Activated CD4-positive, alpha-beta T cell treated with anti-CD3 and anti-CD28 coated beads for 36 hours (primary cell): ENCODE measurements at regions of chr6 and their contacts with region 1.

Region 1: GRCh38 chr6:6676910-6677441 is 88.5 kb downstream of the LY86 start:
- DNase-seq: peak; percentile 86
- ATAC-seq: peak; percentile 78
- H3K4me3 Mint-ChIP-seq: no peak overlapping the region
- H3K27ac Mint-ChIP-seq: no peak overlapping the region
- H3K4me1 Mint-ChIP-seq: peaks cover 9% of the 10 kb centered on the region
- H3K27me3 Mint-ChIP-seq: no peaks in the 10 kb centered on the region

Region 2: DNA sequence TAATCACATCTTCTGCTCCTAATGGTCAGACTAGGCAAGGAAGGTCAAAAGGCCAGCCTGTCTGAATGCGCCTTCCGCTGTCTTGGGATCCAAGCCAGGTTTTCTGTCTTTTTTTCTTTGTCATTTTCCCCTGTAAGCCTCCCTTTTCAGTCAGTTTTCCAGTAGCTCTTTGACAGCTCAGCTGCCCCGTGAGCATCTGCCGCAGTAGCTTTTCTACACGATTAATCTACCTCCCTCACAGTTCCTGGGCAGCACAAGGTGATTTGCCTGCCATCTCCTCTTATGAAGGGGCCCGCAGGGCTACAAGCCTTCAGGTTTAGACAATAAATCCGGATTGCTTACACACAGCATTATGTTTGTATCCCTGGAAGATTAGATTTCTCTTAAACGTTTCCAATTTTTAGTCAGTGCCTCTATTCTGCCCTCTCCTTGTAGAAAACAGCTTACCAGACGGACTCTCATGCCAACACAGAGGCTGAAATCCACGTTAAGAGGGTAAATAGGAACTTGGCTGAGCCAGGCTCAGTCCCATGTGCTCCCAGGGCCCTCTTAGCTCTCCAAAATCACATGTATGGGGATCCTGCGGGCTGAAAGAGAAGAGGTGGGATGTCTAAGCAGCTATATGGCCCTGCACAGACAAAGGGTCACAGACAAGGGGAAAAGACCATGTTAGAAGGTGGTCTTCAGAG is 11.3 kb before region 1 on chr6:
- CTCF ChIA-PET with region 1: interaction called, 20 read pairs
- POLR2A ChIA-PET with region 1: no interaction called
- intact Hi-C with region 1: no loop called
- DNase-seq: no peak
- ATAC-seq: no peak
- H3K4me3 Mint-ChIP-seq: no peak overlapping the region
- H3K27ac Mint-ChIP-seq: no peak overlapping the region
- H3K4me1 Mint-ChIP-seq: peaks cover 26% of the 10 kb centered on the region
- H3K27me3 Mint-ChIP-seq: peaks cover 2% of the 10 kb centered on the region

Region 3: GRCh38 chr6:6724539-6725467 is 47.8 kb after region 1 on chr6:
- CTCF ChIA-PET with region 1: interaction called, 17 read pairs
- POLR2A ChIA-PET with region 1: no interaction called
- intact Hi-C with region 1: loop called in 1 of 2 experiments (anchors 5 kb)
- DNase-seq: peak; percentile 79
- ATAC-seq: peak; percentile 93
- H3K4me3 Mint-ChIP-seq: peak overlapping the region; percentile 51
- H3K27ac Mint-ChIP-seq: peak overlapping the region; percentile 29
- H3K4me1 Mint-ChIP-seq: peaks cover 4% of the 10 kb centered on the region
- H3K27me3 Mint-ChIP-seq: peaks cover 3% of the 10 kb centered on the region

Region 4: GRCh38 chr6:6851059-6851948 is 174.3 kb after region 1 on chr6:
- CTCF ChIA-PET with region 1: no interaction called
- POLR2A ChIA-PET with region 1: no interaction called
- intact Hi-C with region 1: loop called in 1 of 2 experiments (anchors 5 kb)
- DNase-seq: peak; percentile 9
- ATAC-seq: peak; percentile 71
- H3K4me3 Mint-ChIP-seq: no peak overlapping the region
- H3K27ac Mint-ChIP-seq: no peak overlapping the region
- H3K4me1 Mint-ChIP-seq: peaks cover 20% of the 10 kb centered on the region
- H3K27me3 Mint-ChIP-seq: peaks cover 2% of the 10 kb centered on the region

Region 5: DNA sequence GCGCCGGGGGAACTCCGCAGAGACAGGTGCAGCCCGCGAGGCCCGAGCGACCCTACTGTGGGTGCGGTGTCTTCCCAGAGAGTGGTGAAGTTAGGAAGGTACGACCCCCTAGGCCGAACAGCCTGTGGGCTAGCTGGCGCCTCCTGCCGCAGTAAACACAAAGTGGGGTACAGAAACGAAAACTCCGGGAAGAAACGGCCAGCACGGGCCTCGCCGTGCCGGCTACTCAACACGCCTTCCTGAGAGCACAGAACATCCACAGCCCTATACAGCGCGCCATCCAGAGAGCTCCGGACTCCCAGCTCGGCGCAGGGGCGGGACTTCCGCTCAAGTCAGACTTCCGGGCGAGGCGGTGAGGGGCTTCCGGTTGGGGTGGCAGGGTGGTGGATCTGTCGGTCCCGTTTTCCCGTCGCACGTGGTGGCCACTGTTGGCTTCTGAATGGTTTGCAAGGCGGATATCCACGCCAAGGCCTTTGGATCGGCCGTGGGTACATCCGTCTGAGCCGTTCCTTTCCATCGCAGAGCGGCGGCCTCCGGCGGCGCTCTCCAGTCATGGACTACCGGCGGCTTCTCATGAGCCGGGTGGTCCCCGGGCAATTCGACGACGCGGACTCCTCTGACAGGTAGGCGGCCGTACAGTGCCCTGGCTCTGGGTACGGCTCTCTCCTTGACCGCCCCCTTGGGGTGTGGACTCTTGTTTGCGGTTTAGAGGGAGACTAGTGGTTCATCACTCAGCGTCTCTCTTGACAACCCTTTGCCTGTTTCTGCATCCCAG is 712.7 kb after region 1 on chr6 and contains the starts of genes CAGE1 and RIOK1:
- CTCF ChIA-PET with region 1: no interaction called
- POLR2A ChIA-PET with region 1: no interaction called
- intact Hi-C with region 1: loop called in 1 of 2 experiments (anchors 5 kb)
- DNase-seq: peak; percentile 97
- ATAC-seq: peak; percentile 96
- H3K4me3 Mint-ChIP-seq: peak within 1 kb of the TSS; percentile 88
- H3K27ac Mint-ChIP-seq: peak within 1 kb of the TSS; percentile 99
- H3K4me1 Mint-ChIP-seq: peaks cover 42% of the 10 kb centered on the region
- H3K27me3 Mint-ChIP-seq: no peaks in the 10 kb centered on the region
- total RNA-seq, gene CAGE1: 0.07 to 0.09 TPM
- total RNA-seq, gene RIOK1: 37.3 to 39.6 TPM